ENCODE measurements at regions of chr17 and their contacts with region 1.

Region 1: DNA sequence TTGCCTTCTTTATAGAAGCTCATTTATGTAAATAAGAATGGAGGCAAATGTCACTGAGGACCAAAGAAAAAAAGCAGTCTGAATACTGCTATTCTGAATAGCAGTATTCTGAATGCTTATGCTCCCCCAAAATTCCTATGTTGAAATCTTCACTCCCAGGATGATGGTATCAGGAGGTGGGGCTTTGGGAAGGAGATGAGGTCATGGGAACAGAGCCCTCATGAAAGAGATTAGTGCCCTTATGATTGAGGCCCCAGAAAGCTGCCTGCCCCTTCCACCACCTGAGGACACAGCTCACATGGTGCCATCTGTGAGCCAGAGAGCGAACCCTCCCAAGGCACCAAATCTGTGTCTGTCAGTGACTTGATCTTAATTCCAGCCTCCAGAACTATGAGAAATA is 28.8 kb downstream of the HEATR6 start:
- DNase-seq: no peak
- H3K4me3 ChIP-seq: no peak overlapping the region
- H3K27ac ChIP-seq: no peak overlapping the region
- H3K4me1 ChIP-seq: no peaks in the 10 kb centered on the region
- H3K27me3 ChIP-seq: no peaks in the 10 kb centered on the region
- CTCF ChIP-seq: no peak
- POLR2A ChIP-seq: no peak

Region 2: GRCh38 chr17:60065136-60065535 is 15.2 kb after region 1 on chr17:
- intact Hi-C with region 1: loop called (anchors 1 kb)
- DNase-seq: no peak
- H3K4me3 ChIP-seq: no peak overlapping the region
- H3K27ac ChIP-seq: no peak overlapping the region
- H3K4me1 ChIP-seq: no peaks in the 10 kb centered on the region
- H3K27me3 ChIP-seq: no peaks in the 10 kb centered on the region
- CTCF ChIP-seq: no peak
- POLR2A ChIP-seq: no peak

Region 3: GRCh38 chr17:60356940-60357339 is 307.0 kb after region 1 on chr17:
- intact Hi-C with region 1: no loop called
- DNase-seq: no peak
- H3K4me3 ChIP-seq: no peak overlapping the region
- H3K27ac ChIP-seq: peak overlapping the region in 1 of 2 donors; percentile 42
- H3K4me1 ChIP-seq: no peaks in the 10 kb centered on the region
- H3K27me3 ChIP-seq: no peaks in the 10 kb centered on the region
- CTCF ChIP-seq: no peak
- POLR2A ChIP-seq: no peak